IMR-90 (cell line): ENCODE measurements at regions of chr7 and their contacts with region 1.

Region 1: DNA sequence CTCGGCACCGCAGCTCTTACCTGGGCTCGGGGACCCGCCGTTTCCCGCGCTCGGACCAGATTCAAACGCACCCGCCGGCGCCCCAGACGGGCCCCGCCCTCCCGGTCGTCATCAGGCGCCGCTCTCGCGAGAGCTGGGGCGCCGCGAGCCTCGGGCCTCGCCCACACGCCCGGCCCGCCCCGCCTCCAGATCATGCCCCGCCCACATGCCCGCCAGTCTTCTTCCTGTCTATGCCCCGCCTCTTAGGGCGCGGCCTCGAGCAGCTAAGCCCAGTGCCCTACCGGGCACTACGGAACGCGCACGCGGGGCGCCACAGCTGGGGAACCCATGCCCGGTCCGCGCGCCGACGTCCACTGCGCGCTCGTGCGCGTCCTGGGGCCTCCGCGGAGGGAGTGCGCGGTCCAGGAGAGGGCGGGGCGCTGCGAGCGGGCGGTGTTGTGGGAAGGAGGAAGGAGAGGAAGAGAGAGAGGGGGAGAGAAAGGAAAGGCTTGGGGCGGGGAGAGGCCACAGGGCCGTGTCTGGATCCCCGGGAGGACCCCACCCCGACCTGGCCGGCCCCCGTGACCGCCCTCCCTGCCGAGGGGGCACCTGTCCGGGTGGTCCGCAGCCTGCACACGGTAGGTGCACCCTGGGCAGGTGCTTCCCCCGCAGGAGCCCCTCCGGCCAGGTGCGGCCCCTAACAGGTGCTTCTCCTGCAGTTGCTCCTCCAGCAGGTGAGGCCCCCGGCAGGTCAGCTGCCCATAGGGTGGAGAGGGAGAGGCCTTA is at the start of gene NCAPG2:
- DNase-seq: peak; percentile 98
- ATAC-seq: peak; percentile 99
- H3K4me3 ChIP-seq: peak within 1 kb of the TSS; percentile 87
- H3K27ac ChIP-seq: peak within 1 kb of the TSS; percentile 42
- H3K4me1 ChIP-seq: peaks cover 5% of the 10 kb centered on the region
- H3K27me3 ChIP-seq: no peaks in the 10 kb centered on the region
- CTCF ChIP-seq: no peak
- POLR2A ChIP-seq: no peak; the same call in 1 of the 2 replicates
- RAD21 ChIP-seq: peak; percentile 26; the same call in 1 of the 2 replicates
- total RNA-seq, gene NCAPG2: 25.8 and 31.7 TPM in 2 replicates

Region 2: DNA sequence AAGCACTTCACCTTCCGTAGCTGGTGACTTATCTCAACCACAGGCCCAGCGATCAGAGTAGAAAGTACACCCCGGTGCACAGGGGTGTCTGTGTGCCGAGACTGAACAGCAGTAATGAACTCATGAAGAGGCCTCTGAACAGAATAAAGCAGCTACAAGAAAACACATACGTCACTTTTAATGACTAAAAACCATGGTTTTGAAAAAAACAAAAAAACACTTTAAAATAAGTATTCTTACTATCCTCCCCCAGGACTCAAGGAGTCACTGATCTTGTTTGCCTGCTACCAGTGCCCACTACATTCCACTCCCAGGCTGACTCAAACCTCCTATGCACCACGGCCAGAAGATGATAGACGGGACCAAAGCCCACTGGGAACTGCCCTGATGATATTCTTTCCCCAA is 54.1 kb before region 1 on chr7:
- CTCF ChIA-PET with region 1: interaction called, 3 read pairs
- POLR2A ChIA-PET with region 1: no interaction called
- dilution Hi-C with region 1: no loop called
- in situ Hi-C with region 1: no loop called
- intact Hi-C with region 1: loop called (anchors 2 kb)
- DNase-seq: peak; percentile 66
- ATAC-seq: peak; percentile 80
- H3K4me3 ChIP-seq: no peak overlapping the region
- H3K27ac ChIP-seq: peak overlapping the region; percentile 75
- H3K4me1 ChIP-seq: peaks cover 18% of the 10 kb centered on the region
- H3K27me3 ChIP-seq: no peaks in the 10 kb centered on the region
- CTCF ChIP-seq: no peak
- POLR2A ChIP-seq: no peak
- RAD21 ChIP-seq: no peak

Region 3: GRCh38 chr7:158740013-158740656 is 35.2 kb after region 1 on chr7:
- CTCF ChIA-PET with region 1: interaction called, 3 read pairs
- POLR2A ChIA-PET with region 1: no interaction called
- dilution Hi-C with region 1: no loop called
- in situ Hi-C with region 1: no loop called
- intact Hi-C with region 1: loop called (anchors 2 kb)
- DNase-seq: peak; percentile 91
- ATAC-seq: peak; percentile 83
- H3K4me3 ChIP-seq: no peak overlapping the region
- H3K27ac ChIP-seq: peak overlapping the region; percentile 76
- H3K4me1 ChIP-seq: peaks cover 18% of the 10 kb centered on the region
- H3K27me3 ChIP-seq: no peaks in the 10 kb centered on the region
- CTCF ChIP-seq: no peak
- POLR2A ChIP-seq: no peak
- RAD21 ChIP-seq: peak; percentile 31

Region 4: DNA sequence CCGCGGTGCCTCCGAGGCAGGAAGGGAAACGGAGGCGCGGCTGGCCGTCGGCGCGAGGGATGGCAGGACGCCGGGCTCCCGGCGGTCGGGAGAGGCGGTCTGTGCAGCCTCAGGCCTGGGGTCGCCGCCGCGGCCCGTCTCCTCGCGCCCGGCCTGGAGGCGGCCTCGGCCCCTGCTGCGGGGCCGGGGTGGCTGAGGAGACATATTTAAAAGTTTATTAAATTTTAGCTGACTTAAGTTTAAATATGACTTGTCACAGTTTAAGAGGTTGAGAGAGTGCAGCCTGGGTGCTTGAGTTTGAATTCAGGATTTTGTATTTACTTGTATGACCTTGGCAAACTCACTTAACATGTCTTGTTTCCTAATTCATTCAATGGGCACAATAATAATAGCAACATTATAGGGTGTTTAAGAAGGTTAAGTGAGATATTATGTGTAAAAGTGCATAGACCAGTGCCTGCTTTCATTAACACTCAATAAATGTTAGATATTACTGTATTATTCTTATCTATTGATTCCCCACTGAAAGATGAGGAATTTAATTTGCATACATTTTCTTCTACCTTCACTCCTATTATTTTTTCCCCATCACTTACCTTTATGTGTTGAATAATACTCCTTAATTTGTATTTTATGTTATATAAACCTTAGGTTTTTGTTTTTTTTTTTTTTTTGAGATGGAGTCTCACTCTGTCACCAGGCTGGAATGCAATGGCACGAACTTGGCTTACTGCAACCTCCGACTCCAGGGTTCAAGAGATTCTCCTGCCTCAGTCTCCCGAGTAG is 152.2 kb after region 1 on chr7:
- CTCF ChIA-PET with region 1: no interaction called
- POLR2A ChIA-PET with region 1: no interaction called
- dilution Hi-C with region 1: no loop called
- in situ Hi-C with region 1: no loop called
- intact Hi-C with region 1: loop called (anchors 2 kb)
- DNase-seq: no peak
- ATAC-seq: peak; percentile 40
- H3K4me3 ChIP-seq: peak overlapping the region; percentile 69
- H3K27ac ChIP-seq: peak overlapping the region; percentile 47
- H3K4me1 ChIP-seq: 0 out of 2 replicates have a peak, but pooled peaks cover 2% of the 10 kb centered on the region
- H3K27me3 ChIP-seq: no peaks in the 10 kb centered on the region
- CTCF ChIP-seq: no peak
- POLR2A ChIP-seq: no peak
- RAD21 ChIP-seq: no peak